CD4-positive, alpha-beta memory T cell (primary cell): ENCODE measurements at regions of chr11 and their contacts with region 1.

Region 1: DNA sequence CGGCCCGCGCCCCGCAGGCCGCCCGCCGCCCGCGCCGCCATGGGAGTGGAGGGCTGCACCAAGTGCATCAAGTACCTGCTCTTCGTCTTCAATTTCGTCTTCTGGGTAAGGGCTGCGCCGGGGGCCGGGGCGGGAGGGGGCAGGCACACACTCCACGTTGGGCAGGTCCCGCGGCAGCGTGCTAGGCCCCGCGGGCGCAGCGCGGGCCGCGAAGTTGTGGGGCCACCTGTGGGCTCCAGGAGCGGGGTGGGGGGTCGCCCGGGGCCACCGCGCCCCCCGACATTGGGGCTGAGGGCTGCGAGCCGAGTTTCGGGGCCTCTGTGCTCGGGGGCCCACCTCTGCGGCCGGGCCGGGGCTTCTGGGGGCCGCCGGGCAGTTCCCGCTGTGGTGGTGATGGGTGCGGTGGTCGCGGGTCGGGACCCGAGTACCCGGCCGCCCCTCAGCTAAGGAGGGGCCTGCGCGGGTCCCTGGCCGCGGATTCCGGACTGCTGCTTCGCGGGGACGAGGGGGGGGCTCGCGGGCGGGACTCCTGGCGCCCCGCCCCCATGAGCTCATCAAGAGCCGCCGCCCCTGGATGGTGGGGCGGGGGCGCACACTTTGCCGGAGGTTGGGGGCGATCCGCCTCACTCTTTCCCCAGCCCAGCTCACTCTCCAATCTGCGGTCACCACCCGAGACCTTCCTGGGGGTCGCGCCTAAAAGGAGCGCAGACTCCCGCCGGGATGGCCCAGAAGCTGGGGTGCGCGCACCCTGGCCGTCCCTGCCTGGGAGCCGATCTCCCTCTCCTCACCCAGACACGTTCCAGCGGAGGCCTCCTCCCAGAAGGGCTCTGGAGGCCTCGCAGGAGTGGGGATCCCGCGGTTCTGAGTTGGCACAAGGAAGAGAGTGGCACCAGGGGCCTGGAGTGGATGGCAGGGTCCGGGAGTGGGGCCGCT is 667 bp downstream of the CD81 start:
- DNase-seq: peak in 4 of 5 donors; percentile 45 to 66 (median 58)
- H3K4me3 ChIP-seq: peak overlapping the region; percentile 29 to 76
- H3K4me3 Mint-ChIP-seq: peak overlapping the region; percentile 80 to 88 (median 82)
- H3K27ac ChIP-seq: peak overlapping the region; percentile 77
- H3K27ac Mint-ChIP-seq: peak overlapping the region; percentile 66 to 90 (median 77)
- H3K4me1 ChIP-seq: peaks cover 39% of the 10 kb centered on the region
- H3K4me1 Mint-ChIP-seq: peaks cover 11 to 41% (median 26%) of the 10 kb centered on the region in 4 donors
- H3K27me3 ChIP-seq: no peaks in the 10 kb centered on the region
- H3K27me3 Mint-ChIP-seq: no peaks in the 10 kb centered on the region

Region 2: DNA sequence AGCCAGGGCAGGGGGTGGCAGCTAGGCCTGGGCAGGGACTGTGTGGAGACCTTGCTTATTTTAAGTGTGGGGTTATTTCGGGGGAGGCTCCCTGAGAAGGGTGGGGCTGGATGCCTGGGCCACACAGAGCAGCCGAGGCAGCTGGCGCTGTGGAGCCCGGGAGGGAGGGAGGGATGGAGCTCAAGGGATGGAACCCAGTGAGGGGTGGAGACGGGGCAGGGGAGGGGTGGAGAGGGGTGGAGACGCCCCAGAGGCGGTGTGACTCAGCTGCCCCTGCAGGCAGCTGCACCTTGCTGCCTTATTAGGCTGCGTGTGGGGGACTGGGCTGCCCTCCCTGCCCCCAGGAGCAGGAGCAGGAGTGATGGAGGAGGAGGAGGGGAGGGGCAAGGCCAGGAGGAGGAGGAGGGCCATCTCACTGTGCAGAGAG is 13.0 kb after region 1 on chr11:
- CTCF ChIA-PET with region 1: interaction called, 9 read pairs
- POLR2A ChIA-PET with region 1: interaction called, 50 read pairs
- intact Hi-C with region 1: no loop called
- DNase-seq: no peak
- H3K4me3 ChIP-seq: no peak overlapping the region
- H3K4me3 Mint-ChIP-seq: no peak overlapping the region
- H3K27ac ChIP-seq: no peak overlapping the region
- H3K27ac Mint-ChIP-seq: peak overlapping the region in 4 of 7 donors; percentile 64 to 86 (median 72)
- H3K4me1 ChIP-seq: peaks cover 44% of the 10 kb centered on the region
- H3K4me1 Mint-ChIP-seq: peaks cover 15 to 43% (median 29%) of the 10 kb centered on the region in 4 donors
- H3K27me3 ChIP-seq: no peaks in the 10 kb centered on the region
- H3K27me3 Mint-ChIP-seq: no peaks in the 10 kb centered on the region